ENCODE measurements at regions of chr11 and their contacts with region 1.

Region 1: GRCh38 chr11:128311742-128312719 is 275.3 kb downstream of the ETS1 start:
- DNase-seq: peak in 3 of 9 donors; percentile 44 to 53 (median 45)
- ATAC-seq: peak; percentile 85
- H3K4me3 ChIP-seq: no peak overlapping the region
- H3K4me3 Mint-ChIP-seq: peak overlapping the region; percentile 9 to 82 (median 58)
- H3K27ac ChIP-seq: peak overlapping the region; percentile 98
- H3K27ac Mint-ChIP-seq: peak overlapping the region; percentile 65 to 99 (median 97)
- H3K4me1 ChIP-seq: peaks cover 27 to 60% of the 10 kb centered on the region in 2 donors
- H3K4me1 Mint-ChIP-seq: peaks cover 53 to 91% (median 88%) of the 10 kb centered on the region in 7 donors
- H3K27me3 ChIP-seq: no peaks in the 10 kb centered on the region
- H3K27me3 Mint-ChIP-seq: no peaks in the 10 kb centered on the region

Region 2: DNA sequence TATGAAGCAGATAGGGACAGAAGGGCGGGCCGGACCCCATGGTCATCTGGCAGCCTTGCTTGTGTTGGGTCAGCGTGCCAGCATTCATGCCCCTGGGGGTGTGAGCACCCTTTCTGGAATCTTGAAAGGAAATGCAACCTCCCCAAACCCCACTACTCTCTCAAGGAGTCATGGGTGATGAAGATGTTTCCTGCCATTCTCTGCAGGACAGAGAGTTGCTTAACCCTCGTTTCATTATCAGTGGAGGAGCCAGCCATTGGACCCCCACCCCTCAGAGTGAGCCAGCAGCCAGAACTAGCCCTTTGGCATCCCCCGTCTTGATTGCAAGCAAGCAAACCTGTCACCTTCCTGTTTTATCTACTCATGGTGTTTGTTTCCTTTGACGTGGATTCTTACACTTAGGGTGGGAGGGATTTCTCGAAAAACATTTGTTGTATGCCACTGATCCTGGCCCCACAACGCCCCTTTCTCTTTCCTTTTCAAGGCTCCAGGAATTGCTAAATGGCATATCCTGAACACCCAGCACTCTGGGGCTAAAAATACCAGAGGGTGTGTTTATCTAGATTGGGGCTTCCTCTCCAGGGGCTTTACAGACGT is 17.0 kb after region 1 on chr11:
- CTCF ChIA-PET with region 1: interaction called, 7 read pairs
- POLR2A ChIA-PET with region 1: interaction called, 131 read pairs
- intact Hi-C with region 1: no loop called
- DNase-seq: peak in 7 of 9 donors; percentile 67 to 79 (median 72)
- ATAC-seq: peak; percentile 47
- H3K4me3 ChIP-seq: peak overlapping the region; percentile 22
- H3K4me3 Mint-ChIP-seq: peak overlapping the region; percentile 57 to 86 (median 76)
- H3K27ac ChIP-seq: peak overlapping the region; percentile 82
- H3K27ac Mint-ChIP-seq: peak overlapping the region; percentile 93 to 99 (median 96)
- H3K4me1 ChIP-seq: peaks cover 69 to 76% of the 10 kb centered on the region in 2 donors
- H3K4me1 Mint-ChIP-seq: peaks cover 56 to 92% (median 80%) of the 10 kb centered on the region in 7 donors
- H3K27me3 ChIP-seq: no peaks in the 10 kb centered on the region
- H3K27me3 Mint-ChIP-seq: no peaks in the 10 kb centered on the region